Activated B cell treated with CpG ODN at 0.5 μM for 24 hours (primary cell): ENCODE measurements at regions of chr5 and their contacts with region 1.

Region 1: DNA sequence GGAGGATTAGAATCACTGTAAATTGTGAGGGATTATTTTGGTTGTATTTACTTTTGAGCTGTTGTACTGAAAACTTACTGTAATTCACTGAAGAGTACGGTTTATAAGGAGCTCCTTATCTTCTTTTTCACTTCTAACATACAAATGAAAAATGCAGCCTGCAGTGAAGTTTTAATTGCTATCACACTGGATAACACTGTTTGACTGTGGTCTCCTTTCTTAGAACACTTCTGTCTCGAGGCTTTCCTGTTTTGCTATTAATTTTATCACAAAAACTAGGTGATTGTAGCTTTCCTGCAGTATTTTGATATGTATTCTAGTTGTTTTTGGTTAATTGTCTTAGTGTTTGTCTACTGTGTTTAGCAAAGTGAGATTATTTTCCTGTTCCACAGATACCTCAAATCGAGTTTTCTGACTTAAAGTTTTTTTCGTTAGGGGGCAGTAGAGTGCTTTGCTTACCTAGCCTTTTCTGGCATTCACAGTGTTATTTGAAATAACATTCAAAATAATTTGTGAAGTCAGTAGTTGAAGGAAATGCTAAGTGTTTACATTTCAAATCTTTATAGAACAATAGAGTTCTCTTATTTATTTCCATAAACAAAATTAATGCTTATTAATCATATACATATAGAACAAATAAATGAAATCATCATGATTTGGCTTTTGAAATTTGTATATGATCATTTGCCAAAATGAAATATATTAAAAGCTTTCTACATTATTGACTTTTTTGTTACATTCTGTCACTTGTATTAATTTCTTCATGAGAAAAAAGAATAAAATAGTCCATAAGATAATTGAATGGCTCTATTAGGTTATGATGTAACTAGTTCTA is 52.9 kb downstream of the COMMD10 start:
- DNase-seq: no peak
- ATAC-seq: no peak
- H3K4me3 Mint-ChIP-seq: no peak overlapping the region
- H3K27ac Mint-ChIP-seq: no peak overlapping the region
- H3K4me1 Mint-ChIP-seq: peaks cover 15% of the 10 kb centered on the region
- H3K27me3 Mint-ChIP-seq: no peaks in the 10 kb centered on the region
- CTCF ChIP-seq: no peak

Region 2: GRCh38 chr5:115321309-115321708 is 816.5 kb before region 1 on chr5:
- CTCF ChIA-PET with region 1: no interaction called
- POLR2A ChIA-PET with region 1: no interaction called
- intact Hi-C with region 1: no loop called
- DNase-seq: no peak
- ATAC-seq: no peak
- H3K4me3 Mint-ChIP-seq: no peak overlapping the region
- H3K27ac Mint-ChIP-seq: no peak overlapping the region
- H3K4me1 Mint-ChIP-seq: no peaks in the 10 kb centered on the region
- H3K27me3 Mint-ChIP-seq: peaks cover 4% of the 10 kb centered on the region
- CTCF ChIP-seq: no peak

Region 3: GRCh38 chr5:116756531-116756930 is 618.8 kb after region 1 on chr5:
- CTCF ChIA-PET with region 1: no interaction called
- POLR2A ChIA-PET with region 1: no interaction called
- intact Hi-C with region 1: loop called (anchors 2 kb)
- DNase-seq: no peak
- ATAC-seq: no peak
- H3K4me3 Mint-ChIP-seq: no peak overlapping the region
- H3K27ac Mint-ChIP-seq: no peak overlapping the region
- H3K4me1 Mint-ChIP-seq: no peaks in the 10 kb centered on the region
- H3K27me3 Mint-ChIP-seq: peaks cover 3% of the 10 kb centered on the region
- CTCF ChIP-seq: no peak

Region 4: GRCh38 chr5:116947691-116948528 is 810.1 kb after region 1 on chr5:
- CTCF ChIA-PET with region 1: interaction called, 16 read pairs
- POLR2A ChIA-PET with region 1: no interaction called
- intact Hi-C with region 1: loop called (anchors 1 kb)
- DNase-seq: peak; percentile 31
- ATAC-seq: peak; percentile 79
- H3K4me3 Mint-ChIP-seq: no peak overlapping the region
- H3K27ac Mint-ChIP-seq: no peak overlapping the region
- H3K4me1 Mint-ChIP-seq: peaks cover 5% of the 10 kb centered on the region
- H3K27me3 Mint-ChIP-seq: no peaks in the 10 kb centered on the region
- CTCF ChIP-seq: peak; percentile 47

Region 5: DNA sequence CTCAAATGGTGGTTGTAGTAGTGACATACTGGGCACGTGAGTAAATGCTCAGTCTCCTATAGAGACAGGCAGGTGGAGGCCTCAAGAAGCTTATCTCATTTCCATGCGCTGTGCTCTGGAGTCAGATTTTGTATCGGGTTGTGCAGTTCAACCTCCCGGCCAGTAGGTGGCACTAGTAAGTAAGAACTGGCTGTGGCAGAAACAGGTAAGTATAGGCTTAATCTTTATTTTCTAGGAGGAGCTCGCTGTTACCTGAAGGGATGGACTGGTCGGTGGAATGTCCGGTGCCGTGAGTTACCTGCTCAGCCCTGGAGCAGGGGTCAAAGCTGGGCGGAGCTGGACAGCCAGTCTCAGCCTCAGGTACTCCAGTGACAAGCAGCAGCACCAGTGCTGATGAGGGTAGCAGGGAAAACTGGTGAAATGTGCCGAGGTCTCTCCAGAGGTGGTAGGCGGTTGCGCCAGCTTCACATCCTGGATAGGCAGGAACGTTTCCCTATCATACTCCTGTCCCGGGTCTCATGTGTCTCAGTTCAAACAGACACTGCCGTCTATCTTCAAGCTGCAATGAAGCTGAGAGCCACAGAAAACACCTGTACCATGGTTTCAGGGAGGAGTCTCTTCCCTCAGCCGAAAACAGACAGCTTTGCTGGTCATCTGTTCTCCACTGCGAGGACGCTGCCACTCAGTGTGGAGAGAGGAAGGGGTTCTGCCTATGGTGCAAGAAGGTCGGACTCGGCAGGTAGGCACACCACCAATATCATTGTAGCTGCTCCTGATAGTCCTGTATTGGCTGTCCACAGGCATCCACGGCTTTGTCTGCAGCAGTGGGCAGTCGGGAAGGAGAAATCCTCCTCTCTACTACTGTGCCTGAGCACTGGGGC is 1317.2 kb after region 1 on chr5:
- CTCF ChIA-PET with region 1: no interaction called
- POLR2A ChIA-PET with region 1: no interaction called
- intact Hi-C with region 1: loop called (anchors 5 kb)
- DNase-seq: peak; percentile 30
- ATAC-seq: peak; percentile 81
- H3K4me3 Mint-ChIP-seq: peak overlapping the region; percentile 59
- H3K27ac Mint-ChIP-seq: no peak overlapping the region
- H3K4me1 Mint-ChIP-seq: peaks cover 7% of the 10 kb centered on the region
- H3K27me3 Mint-ChIP-seq: peaks cover 4% of the 10 kb centered on the region
- CTCF ChIP-seq: peak; percentile 50